AG04450 (cell line): ENCODE measurements at regions of chr6 and their contacts with region 1.

Region 1: DNA sequence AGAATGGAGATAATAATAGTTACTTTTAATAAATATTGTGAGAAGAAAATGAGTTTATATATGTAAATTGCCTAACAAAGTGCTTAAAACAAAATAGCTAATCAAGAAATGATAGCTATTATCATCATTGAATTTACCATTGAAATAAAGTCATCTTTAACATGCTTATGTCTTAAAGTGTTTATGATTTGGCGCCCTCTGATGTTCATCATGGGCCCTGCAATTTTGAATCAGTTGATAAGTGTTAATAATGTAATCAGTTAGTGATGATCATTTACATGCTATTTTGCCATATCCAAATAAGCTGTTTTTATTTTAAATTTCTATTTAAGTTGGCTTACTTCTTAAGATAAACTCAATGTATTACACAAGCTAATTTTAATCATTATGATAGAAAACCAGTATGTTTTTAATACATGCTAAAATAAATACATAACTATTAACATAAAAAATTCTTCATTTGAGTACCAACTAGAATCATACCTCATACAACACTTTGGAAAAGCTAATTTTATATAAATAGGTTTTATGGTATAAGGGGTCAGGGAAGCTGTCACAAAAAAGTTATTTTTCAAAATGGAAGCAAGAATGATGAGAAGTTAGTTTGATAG is 39.2 kb upstream of the TPD52L1 start:
- DNase-seq: no peak
- H3K4me3 ChIP-seq: no peak overlapping the region
- H3K27ac ChIP-seq: no peak overlapping the region
- H3K27me3 ChIP-seq: no peaks in the 10 kb centered on the region
- CTCF ChIP-seq: peak; percentile 89

Region 2: GRCh38 chr6:124310139-124310538 is 804.2 kb before region 1 on chr6:
- CTCF ChIA-PET with region 1: no interaction called
- POLR2A ChIA-PET with region 1: no interaction called
- DNase-seq: no peak
- H3K4me3 ChIP-seq: no peak overlapping the region
- H3K27ac ChIP-seq: no peak overlapping the region
- H3K27me3 ChIP-seq: no peaks in the 10 kb centered on the region
- CTCF ChIP-seq: no peak

Region 3: DNA sequence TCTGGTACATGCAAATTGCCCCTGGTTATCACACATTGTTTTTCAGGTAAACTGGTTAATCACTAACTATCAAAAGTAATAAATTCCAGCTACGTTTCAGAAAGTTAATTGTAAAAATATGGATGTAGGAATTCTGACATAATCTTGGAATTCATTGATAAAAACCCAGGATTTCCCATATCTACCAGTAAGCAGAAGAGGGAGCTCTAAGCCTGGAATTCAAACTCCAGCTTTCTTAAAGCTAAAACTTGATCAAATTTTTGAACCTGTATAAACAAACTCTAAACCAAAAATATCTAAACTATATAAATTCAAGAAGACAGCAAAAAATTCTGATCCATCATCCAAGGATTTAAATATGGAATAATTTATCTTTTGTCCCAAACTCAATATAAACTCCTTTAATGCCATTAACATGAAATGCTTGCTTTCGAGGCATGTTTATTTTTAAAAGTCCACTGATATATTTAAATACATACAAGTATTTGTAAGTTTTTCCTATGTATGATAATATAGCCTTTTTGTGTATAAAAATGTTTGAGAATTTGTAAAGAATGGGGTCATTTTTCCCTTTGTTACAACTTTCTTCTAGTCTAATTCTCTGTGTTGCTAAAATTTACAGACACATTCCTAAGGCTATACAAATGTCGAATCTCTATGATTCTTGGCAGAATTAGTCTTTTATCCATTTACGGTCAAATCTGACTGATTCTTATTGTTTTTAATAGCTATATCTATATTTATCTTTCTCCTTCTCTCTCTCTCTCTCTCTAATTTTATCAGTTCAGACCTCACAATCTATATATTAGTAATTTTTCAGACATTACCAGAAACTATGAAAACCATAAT is 243.5 kb before region 1 on chr6:
- CTCF ChIA-PET with region 1: interaction called, 178 read pairs
- POLR2A ChIA-PET with region 1: no interaction called
- DNase-seq: peak; percentile 16
- H3K4me3 ChIP-seq: no peak overlapping the region
- H3K27ac ChIP-seq: no peak overlapping the region
- H3K27me3 ChIP-seq: no peaks in the 10 kb centered on the region
- CTCF ChIP-seq: peak; percentile 68

Region 4: GRCh38 chr6:124928851-124929250 is 185.5 kb before region 1 on chr6:
- CTCF ChIA-PET with region 1: interaction called, 13 read pairs
- POLR2A ChIA-PET with region 1: no interaction called
- DNase-seq: no peak
- H3K4me3 ChIP-seq: no peak overlapping the region
- H3K27ac ChIP-seq: no peak overlapping the region
- H3K27me3 ChIP-seq: no peaks in the 10 kb centered on the region
- CTCF ChIP-seq: no peak

Region 5: DNA sequence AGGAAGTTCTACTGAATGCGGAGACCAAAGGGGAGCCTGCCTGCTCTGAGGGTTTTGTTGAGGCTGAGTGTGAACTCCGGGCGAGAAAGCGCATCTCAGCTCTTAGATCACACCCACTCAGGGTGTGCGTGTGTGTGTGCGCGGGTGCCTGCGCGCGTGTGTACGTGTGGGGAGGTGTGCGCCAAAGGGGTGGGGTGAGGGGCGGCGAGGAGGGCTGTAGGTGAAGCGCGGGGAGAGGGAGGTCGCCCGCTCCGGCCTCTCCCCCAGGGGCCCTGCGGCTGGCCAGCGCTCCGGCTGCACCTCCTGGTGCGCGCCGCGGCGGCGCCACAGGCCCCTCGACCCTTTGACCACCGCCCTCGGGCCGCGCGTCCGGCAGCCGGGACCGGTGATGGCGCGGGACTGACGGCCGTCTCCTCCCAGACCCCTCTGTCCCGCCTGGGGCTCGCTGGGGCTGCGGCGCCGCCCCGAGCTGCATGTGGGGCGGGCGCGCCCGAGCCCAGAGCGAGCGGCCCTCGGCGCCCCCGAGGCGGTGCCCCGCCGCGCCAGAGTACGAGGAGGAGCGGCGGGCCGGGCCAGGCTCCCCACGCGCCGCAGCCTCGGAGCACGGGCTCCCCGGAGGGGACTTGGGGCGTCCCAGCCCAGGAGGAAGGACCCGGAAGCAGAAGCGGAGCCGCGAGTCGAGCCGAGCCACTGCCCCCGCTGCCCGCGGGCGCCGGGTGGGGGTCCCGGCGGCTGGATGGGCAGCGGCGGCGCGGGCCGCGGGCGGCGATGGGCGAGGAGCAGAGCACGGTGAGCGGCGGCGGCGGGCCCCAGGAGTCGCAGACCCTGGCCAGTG is 152.4 kb before region 1 on chr6 and contains the start of gene RNF217:
- CTCF ChIA-PET with region 1: interaction called, 46 read pairs
- POLR2A ChIA-PET with region 1: interaction called, 4 read pairs
- DNase-seq: no peak
- H3K4me3 ChIP-seq: peak within 1 kb of the TSS; percentile 90
- H3K27ac ChIP-seq: peak within 1 kb of the TSS; percentile 97
- H3K27me3 ChIP-seq: no peaks in the 10 kb centered on the region
- CTCF ChIP-seq: no peak
- polyA plus RNA-seq, gene RNF217: 21.8 and 24.6 TPM in 2 replicates

Region 6: DNA sequence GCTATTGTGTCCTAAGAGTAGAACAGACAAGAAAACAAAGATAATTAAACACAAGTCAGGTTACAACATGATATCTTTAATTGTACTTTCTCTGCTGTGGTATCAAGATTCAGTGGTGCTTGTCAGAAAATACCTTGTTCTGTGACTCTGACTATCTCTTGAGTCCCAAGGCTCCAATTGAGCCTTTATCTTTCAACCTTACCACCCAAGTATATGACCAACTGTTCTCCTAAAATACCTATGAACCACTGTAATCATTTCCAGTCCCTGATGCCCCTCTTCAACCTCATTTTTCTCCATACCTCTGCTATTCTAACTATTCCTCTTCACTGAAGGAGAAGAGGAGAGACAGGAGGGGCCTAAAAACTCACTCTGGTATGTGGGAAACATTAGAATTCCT is 27.6 kb before region 1 on chr6:
- CTCF ChIA-PET with region 1: no interaction called
- POLR2A ChIA-PET with region 1: no interaction called
- DNase-seq: no peak
- H3K4me3 ChIP-seq: no peak overlapping the region
- H3K27ac ChIP-seq: no peak overlapping the region
- H3K27me3 ChIP-seq: no peaks in the 10 kb centered on the region
- CTCF ChIP-seq: no peak

Region 7: DNA sequence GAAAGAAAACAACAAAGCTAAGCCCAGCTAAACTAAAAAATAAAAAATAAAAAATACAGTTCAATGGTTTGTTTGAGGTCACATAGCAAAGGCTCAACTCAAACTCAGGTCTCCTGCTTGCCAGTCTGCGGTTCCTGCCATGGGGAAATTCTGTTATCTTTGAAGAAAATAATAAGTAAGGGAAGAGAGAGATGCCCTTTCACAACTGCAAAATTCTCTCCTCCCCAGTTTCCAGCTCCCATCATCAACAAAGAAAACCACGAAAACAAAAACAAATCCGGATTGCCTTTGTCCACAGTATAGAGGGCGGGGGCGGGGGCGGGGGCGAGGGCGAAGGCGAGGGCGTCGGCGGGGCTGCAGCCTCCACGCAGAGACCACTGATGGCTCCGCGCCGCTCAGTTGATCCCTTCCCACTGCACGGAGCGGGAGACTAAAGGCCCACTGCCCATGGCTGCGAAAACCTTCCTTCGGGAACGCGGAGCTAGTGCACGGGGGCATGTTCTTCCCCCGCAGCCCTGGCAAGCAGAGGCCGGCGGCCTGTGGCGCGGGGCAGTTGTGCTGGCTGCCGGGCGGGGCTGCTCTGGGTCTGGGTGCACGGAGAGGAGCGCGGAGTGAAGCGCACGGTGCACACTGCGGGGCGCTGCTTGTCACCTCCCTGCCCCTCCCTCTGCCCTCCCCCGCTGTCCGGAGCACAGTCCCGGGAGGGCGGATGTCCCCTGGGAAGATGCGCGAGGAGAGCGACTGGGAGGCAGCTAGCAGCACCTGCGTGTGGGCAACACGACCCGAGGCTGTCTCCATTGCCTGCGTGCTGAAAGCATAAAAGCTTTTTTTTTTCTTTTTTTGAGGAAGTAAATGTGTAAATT is 14.9 kb before region 1 on chr6:
- CTCF ChIA-PET with region 1: interaction called, 53 read pairs
- POLR2A ChIA-PET with region 1: no interaction called
- DNase-seq: no peak
- H3K4me3 ChIP-seq: peak overlapping the region; percentile 63
- H3K27ac ChIP-seq: no peak overlapping the region
- H3K27me3 ChIP-seq: no peaks in the 10 kb centered on the region
- CTCF ChIP-seq: no peak

Region 8: DNA sequence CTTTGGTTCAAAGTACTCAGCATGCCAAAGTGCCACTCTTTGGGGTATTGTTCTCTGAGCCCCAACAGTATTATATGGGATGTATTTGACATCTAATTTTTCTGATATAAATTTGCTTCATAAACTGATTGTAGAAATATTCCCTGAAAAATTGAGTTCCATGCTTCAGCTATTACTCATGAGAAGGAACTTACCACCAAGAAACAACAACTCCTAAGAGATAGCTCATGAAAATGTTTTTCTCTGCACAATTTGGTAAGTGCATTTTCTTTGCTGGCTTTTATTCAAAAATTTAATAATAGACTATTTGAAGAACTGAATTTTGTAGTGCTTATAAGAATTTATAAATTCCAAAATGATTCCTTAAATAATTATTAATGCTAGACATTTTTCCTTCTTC is 26.5 kb after region 1 on chr6:
- CTCF ChIA-PET with region 1: interaction called, 14 read pairs
- POLR2A ChIA-PET with region 1: no interaction called
- DNase-seq: no peak
- H3K4me3 ChIP-seq: no peak overlapping the region
- H3K27ac ChIP-seq: no peak overlapping the region
- H3K27me3 ChIP-seq: no peaks in the 10 kb centered on the region
- CTCF ChIP-seq: no peak